Right ventricle myocardium inferior (tissue), 1 donor: ENCODE measurements at regions of chr4 and their contacts with region 1.

Region 1: GRCh38 chr4:88033309-88033708 is 25.9 kb downstream of the PKD2 start:
- DNase-seq: no peak
- ATAC-seq: peak; percentile 54

Region 2: DNA sequence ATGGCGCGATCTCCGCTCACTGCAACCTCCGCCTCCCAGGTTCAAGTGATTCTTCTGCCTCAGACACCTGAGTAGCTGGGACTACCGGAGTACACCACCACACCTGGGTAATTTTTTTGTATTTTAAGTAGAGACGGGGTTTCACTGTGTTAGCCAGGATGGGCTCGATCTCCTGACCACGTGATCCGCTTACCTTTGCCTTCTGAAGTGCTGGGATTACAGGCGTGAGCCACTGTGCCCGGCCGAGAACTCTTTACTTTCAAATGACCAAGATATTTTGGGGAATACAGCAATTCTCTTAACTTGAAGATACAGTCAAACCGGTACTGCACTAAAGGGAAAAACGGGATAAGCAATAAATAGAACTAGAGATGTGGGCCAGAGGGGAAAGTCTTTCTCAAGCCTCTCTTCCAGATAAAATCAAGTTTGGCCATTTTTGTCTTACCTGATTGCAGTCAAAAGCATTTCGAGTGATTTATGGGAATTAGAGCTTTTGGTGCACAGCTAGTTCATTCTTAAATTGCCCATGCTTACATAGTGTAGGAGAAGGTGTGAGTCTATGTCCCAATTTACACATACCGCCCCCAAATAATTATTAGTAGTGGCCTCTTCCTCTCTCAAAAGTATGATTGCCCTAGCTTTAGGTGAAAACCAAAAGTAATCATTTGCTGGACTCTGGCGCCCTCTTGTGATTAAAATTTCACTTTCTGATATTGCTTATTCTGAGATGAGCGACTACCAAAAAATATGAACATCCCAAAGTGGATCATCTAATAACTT is 178.4 kb after region 1 on chr4:
- intact Hi-C with region 1: loop called (anchors 5 kb)
- DNase-seq: no peak
- ATAC-seq: no peak

Region 3: GRCh38 chr4:88514557-88515511 is 481.5 kb after region 1 on chr4:
- intact Hi-C with region 1: loop called (anchors 10 kb)
- DNase-seq: no peak
- ATAC-seq: no peak